Activated CD4-positive, alpha-beta T cell treated with anti-CD3 and anti-CD28 coated beads for 36 hours (primary cell): ENCODE measurements at regions of chr6 and their contacts with region 1.

Region 1: GRCh38 chr6:3990692-3991501 is 88.0 kb downstream of the FAM217A start:
- DNase-seq: peak; percentile 86
- ATAC-seq: peak; percentile 100
- H3K4me3 Mint-ChIP-seq: no peak overlapping the region
- H3K27ac Mint-ChIP-seq: peak overlapping the region; percentile 7
- H3K4me1 Mint-ChIP-seq: peaks cover 10% of the 10 kb centered on the region
- H3K27me3 Mint-ChIP-seq: no peaks in the 10 kb centered on the region

Region 2: DNA sequence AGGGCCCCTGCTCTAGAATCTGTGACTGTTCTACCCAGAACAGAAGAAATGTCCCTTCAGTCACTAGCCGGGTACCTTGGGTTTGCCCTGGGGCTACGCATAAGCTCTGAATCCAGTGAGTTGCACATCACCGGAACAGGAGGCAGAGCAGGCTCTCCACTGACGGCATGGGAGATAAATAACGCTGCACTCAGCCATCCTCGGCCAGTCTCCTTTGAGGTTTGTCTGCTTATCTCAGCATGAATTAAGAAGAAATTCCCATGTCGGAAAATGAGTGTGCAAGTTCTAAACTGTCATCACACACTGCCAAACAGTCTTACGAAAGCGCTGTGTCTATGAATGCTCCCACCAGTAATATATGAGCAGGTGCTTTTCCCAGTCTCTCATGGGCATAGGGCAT is 50.9 kb before region 1 on chr6:
- CTCF ChIA-PET with region 1: interaction called, 12 read pairs
- POLR2A ChIA-PET with region 1: no interaction called
- intact Hi-C with region 1: no loop called
- DNase-seq: no peak
- ATAC-seq: no peak
- H3K4me3 Mint-ChIP-seq: no peak overlapping the region
- H3K27ac Mint-ChIP-seq: no peak overlapping the region
- H3K4me1 Mint-ChIP-seq: peaks cover 2% of the 10 kb centered on the region
- H3K27me3 Mint-ChIP-seq: peaks cover 12% of the 10 kb centered on the region